AG04449 (cell line): ENCODE measurements at regions of chr16 and their contacts with region 1.

Region 1: DNA sequence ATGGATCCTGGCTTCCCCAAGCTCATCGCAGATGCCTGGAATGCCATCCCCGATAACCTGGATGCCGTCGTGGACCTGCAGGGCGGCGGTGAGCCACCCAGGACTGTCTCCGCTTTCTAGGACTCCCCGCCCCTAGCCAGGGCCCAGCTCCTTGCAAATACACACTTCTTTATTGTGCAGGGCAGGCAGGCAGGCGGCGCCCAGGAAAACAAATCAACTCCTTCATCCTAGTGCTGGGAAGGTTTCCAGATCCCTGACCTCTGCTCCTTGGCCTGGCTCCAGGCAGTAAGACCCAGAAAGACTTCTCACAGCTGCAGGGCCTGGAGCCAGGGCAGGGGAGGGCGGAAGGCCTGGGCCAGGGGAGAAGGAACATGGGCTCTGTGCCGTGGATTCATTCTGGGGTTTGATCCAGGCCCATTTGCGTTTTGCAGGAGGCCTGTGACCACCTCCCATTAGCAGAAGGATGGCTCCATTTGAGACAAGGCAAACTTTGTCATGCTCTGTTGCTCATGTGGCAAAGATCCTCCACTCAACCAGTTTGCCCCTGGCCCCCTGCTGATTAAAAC is 6.0 kb upstream of the LPCAT2 start:
- DNase-seq: no peak
- H3K4me3 ChIP-seq: no peak overlapping the region
- CTCF ChIP-seq: no peak

Region 2: DNA sequence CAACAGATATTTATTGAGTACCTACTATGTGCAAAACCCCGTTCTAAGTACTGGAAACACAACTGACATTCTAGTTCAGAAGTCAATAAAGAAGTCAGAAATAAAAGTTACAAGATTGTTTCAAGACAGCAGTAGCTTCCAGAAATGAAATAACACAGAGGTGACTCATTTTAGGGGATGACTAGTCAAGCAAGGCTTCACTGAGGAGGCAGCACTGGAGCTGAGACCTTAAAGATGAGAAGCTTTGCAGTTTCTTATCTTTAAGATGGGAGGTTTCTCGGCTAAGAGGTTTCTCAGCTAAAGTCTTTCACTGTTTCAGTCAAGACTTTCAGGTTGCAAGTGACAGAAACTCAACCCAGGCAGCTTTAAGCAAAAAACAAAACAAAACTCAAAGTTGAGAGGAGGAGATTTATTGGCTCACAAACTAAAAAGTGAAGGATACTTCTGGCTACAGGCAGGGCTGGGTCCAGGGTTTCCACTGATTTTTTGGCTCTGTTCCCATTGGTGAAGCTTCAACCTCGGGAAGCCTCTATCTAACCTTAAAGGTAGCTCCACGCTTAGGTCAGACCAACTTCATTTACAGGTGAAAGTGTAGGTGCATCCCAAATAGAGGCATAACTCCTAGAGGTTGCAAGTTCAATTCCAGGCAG is 31.3 kb before region 1 on chr16:
- CTCF ChIA-PET with region 1: interaction called, 44 read pairs
- POLR2A ChIA-PET with region 1: interaction called, 11 read pairs
- DNase-seq: peak; percentile 60
- H3K4me3 ChIP-seq: no peak overlapping the region; the same call in 1 of the 2 replicates
- CTCF ChIP-seq: no peak

Region 3: DNA sequence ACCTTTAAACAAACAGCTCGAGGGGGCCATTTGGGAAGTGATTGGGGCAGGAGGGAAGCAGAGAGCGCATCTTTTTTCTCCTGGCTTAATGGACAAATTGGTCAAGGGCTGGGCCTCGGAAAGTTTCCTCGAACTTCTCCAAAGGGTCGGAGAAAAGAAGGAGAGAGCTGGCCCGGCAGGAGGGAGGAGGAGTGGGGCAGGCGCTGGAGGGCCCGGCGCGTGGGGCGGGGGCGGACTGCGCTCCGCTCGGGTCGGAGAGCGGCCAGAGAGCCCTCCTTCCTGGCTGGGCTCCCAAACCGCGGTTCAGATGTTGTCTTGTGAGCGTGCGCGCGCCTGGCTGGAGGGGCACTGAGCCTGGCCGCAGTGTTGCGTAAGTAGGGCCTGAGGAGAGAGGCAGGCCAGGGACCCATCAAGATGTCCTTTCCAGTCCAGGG is 22.6 kb before region 1 on chr16:
- CTCF ChIA-PET with region 1: interaction called, 14 read pairs
- POLR2A ChIA-PET with region 1: interaction called, 31 read pairs
- DNase-seq: peak; percentile 76
- H3K4me3 ChIP-seq: peak overlapping the region; percentile 85
- CTCF ChIP-seq: no peak

Region 4: GRCh38 chr16:55487048-55487803 is 15.7 kb before region 1 on chr16:
- CTCF ChIA-PET with region 1: interaction called, 9 read pairs
- POLR2A ChIA-PET with region 1: interaction called, 34 read pairs
- DNase-seq: peak; percentile 79
- H3K4me3 ChIP-seq: no peak overlapping the region
- CTCF ChIP-seq: no peak

Region 5: GRCh38 chr16:55543472-55543871 is 40.6 kb after region 1 on chr16:
- CTCF ChIA-PET with region 1: interaction called, 21 read pairs
- POLR2A ChIA-PET with region 1: interaction called, 4 read pairs
- DNase-seq: no peak
- H3K4me3 ChIP-seq: no peak overlapping the region
- CTCF ChIP-seq: no peak